Activated T-helper 2 cell treated with anti-CD3 and anti-CD28 coated beads, Interferon-gamma antibody, Interleukin-2, Interleukin-4, amounts not matched to agents 10 μg/mL and 5 μg/mL and 100 μg/mL, durations not matched to agents 14 hours and 24 hours and 36 hours (primary cell): ENCODE measurements at regions of chr1 and their contacts with region 1.

Region 1: DNA sequence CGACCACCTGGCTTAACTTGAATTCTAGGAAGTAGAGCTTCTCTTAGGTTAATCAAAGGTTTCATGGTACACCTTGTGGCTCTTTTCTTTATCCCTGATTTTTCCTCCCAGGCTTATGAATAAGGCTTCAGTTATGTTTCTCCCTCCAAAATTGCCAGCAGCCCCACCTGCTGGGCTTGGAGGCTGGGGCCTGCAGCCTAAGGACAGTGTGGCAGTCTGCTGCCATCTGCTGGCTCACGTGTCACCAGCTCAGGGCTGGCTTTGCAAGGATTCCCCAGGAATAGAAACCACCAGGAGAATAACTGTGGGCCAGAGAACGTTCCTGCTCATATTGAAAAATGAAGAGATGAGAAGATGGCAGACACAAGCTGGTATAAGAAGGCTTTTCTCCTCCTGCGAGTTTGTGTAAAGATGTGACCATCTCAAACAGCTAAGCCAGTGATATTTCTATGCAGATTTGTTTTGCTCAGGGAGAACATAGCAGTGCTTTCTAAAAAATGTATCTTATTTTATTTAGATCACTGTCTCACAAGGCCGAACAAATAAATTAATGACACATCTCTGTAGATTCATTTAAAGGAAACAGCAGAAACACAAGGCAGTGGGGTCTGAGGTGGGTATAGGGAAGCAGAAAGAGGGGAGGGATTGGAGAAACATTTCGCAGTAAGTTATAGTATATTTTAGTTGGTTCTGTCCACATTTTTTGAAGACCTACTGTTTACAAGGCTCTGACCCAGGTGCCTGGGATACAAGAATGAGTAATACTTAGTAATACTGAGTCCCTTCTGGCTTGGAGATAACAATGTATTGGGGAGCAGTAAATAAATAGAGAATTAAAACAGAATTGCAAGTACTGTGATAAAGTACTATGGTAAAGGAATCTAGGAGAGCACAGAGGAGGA is 291.1 kb upstream of the SGIP1 start:
- DNase-seq: peak; percentile 61
- H3K4me3 Mint-ChIP-seq: no peak overlapping the region
- H3K27ac Mint-ChIP-seq: no peak overlapping the region
- H3K4me1 Mint-ChIP-seq: peaks cover 27% of the 10 kb centered on the region
- H3K27me3 Mint-ChIP-seq: peaks cover 12% of the 10 kb centered on the region

Region 2: DNA sequence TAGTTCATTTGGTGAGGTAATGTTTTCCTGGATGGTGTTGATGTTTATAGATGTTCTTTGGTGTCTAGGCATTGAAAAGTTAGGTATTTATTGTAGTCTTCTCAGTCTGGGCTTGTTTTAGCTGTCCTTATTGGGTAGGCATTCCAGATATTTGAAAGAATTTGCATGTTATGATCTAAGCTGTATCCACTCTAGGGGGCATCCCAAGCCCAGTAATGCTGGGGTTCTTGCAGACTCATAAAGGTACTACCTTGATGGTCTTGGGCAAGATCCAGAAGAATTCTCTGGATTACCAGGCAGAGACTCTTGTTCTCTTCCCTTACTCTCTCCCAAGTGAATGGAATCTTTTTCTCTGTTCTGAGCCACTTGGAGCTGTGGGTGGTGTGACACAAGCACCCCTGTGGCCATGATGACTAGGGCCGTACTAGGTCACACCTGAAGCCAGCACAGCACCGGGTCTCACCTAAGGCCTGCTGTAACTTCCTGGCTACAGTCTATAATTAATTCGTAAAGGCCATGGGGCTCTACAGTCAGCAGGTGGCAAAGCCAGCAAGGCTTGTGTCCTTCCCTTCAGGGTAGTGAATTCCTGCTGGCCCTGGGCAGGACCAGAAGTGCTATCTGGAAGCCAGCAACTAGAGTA is 525.0 kb before region 1 on chr1:
- intact Hi-C with region 1: loop called (anchors 10 kb)
- DNase-seq: no peak
- H3K4me3 Mint-ChIP-seq: no peak overlapping the region
- H3K27ac Mint-ChIP-seq: no peak overlapping the region
- H3K4me1 Mint-ChIP-seq: no peaks in the 10 kb centered on the region
- H3K27me3 Mint-ChIP-seq: peaks cover 30% of the 10 kb centered on the region

Region 3: DNA sequence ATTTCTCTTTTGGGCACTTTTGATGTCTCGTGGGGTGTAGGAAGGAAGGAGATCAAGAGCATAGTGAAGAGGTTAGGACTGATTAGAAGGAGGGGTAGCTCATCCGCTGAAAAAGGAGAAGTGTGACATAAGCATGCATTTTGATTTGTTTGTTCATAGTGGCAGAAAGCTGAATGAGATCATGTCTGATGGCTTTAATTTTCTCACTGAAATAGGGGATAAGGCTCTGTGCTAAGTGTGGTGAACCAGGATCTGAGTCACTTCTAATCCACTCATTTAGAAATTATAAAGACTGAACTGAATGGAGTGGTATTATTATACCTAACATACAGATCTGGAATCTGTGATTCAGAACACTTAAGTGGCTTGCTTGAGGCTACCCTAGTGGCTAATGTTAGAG is 105.7 kb before region 1 on chr1:
- intact Hi-C with region 1: loop called (anchors 2 kb)
- DNase-seq: no peak
- H3K4me3 Mint-ChIP-seq: no peak overlapping the region
- H3K27ac Mint-ChIP-seq: no peak overlapping the region
- H3K4me1 Mint-ChIP-seq: peaks cover 4% of the 10 kb centered on the region
- H3K27me3 Mint-ChIP-seq: no peaks in the 10 kb centered on the region

Region 4: GRCh38 chr1:66282343-66282852 is 39.5 kb after region 1 on chr1:
- intact Hi-C with region 1: loop called (anchors 5 kb)
- DNase-seq: peak; percentile 60
- H3K4me3 Mint-ChIP-seq: peak overlapping the region; percentile 35
- H3K27ac Mint-ChIP-seq: peak overlapping the region; percentile 86
- H3K4me1 Mint-ChIP-seq: peaks cover 69% of the 10 kb centered on the region
- H3K27me3 Mint-ChIP-seq: peaks cover 19% of the 10 kb centered on the region

Region 5: DNA sequence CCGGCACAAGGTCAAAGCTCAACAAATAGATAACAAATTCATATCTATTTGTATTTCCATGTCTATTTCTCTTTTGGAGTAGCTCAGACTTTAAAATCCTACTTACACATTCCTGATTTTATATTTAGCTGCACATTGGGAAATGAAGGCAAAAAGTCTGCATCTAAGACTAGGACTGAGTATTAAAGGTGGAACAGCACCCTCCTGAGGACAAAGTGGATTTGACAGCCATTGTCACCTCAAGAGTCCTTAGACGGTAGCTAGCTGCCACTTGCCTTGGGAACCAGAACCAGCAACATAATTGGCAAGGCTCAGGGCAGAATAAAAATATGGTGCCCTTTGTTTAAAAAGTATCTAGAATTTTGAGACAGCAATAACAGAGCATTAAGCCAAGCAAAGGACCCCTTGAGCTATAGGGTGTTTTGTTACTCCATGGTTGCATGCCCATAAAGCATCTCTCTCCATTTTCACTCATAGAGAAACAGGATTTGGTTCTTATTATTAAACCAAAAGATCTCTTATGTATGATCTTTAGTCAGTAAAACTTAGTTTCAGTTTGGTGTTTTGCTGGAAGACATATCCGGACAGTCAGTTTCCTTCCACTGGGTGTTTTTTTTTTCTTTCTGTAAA is 261.1 kb after region 1 on chr1:
- intact Hi-C with region 1: loop called (anchors 5 kb)
- DNase-seq: no peak
- H3K4me3 Mint-ChIP-seq: no peak overlapping the region
- H3K27ac Mint-ChIP-seq: no peak overlapping the region
- H3K4me1 Mint-ChIP-seq: no peaks in the 10 kb centered on the region
- H3K27me3 Mint-ChIP-seq: peaks cover 17% of the 10 kb centered on the region